ENCODE measurements at regions of chr6 and their contacts with region 1.

Region 1: DNA sequence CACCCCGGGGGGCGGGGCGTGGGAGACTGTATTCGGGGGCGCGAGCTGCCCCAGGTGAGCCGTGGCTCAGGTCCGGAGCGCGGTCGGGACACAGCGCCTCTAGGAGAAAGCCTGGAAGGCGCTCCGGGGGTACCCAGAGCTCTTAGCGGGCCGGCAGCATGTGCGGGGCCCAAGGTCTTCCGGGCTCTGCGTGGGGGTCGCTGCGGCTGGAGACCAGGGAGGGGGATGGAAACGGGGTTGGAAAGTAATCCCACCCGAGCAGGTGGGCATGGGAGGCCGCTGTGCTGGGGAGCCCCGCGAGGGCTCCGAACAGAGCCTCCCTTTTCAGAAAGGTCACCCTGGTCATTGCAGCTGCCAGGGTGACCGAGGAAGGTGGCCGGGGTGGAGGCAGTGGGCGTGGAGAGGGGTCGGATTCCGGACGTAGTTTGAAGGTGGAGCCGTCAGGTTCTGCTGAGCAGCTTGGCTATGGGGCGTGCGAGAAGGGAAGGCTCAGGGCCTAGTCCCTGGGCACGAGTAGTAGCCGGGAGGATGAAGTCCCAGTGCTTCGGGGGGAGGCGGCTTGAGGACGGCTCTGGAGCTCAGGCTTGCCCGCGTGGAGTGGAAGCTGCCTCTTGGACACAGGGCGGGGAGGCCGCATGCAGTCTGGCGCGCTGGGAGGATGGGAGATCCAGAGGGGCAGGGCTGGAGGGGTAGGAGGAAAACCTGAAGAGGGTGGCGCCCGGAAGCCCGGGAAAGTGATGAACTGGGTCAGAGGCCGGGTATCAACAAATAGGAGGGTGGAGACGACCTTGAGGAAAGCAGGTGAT is at the start of gene SIRT5:
- DNase-seq: peak; percentile 93
- H3K4me3 ChIP-seq: peak within 1 kb of the TSS; percentile 46 to 84 (median 76)
- H3K27ac ChIP-seq: peak within 1 kb of the TSS; percentile 96 to 100 (median 98)
- H3K4me1 ChIP-seq: peaks cover 0 to 19% (median 7%) of the 10 kb centered on the region in 4 donors
- H3K27me3 ChIP-seq: no peaks in the 10 kb centered on the region
- CTCF ChIP-seq: no peak
- EP300 ChIP-seq: peak; percentile 29
- POLR2A ChIP-seq: peak; percentile 97
- total RNA-seq, gene SIRT5: 10.1 to 21.0 (median 13.9) TPM

Region 2: DNA sequence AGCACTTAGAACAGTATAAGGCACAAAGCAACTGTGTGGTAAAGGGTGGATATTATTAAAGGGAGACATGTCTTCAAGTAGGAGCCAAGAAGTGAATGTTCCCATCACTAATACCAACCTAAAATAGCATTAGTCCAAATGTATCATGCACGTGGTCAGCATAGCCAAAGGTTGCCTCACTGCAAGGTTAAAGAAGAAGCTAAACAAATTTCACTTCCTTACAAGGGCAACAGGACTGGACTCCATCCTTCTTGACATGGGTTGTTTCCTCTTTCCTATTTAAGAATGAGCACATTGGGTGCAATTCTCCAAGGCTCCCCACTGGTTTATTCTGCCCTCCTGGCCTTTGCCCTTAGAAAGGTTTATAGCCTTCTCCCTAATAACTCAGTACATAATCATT is 671.5 kb before region 1 on chr6:
- in situ Hi-C with region 1: no loop called
- intact Hi-C with region 1: no loop called
- DNase-seq: no peak
- H3K4me3 ChIP-seq: no peak overlapping the region
- H3K27ac ChIP-seq: no peak overlapping the region
- H3K4me1 ChIP-seq: no peaks in the 10 kb centered on the region
- H3K27me3 ChIP-seq: no peaks in the 10 kb centered on the region
- CTCF ChIP-seq: no peak
- EP300 ChIP-seq: no peak
- POLR2A ChIP-seq: no peak

Region 3: GRCh38 chr6:13194852-13195251 is 379.9 kb before region 1 on chr6:
- in situ Hi-C with region 1: loop called in 1 of 4 experiments (anchors 25 kb)
- intact Hi-C with region 1: no loop called
- DNase-seq: peak; percentile 48
- H3K4me3 ChIP-seq: no peak overlapping the region
- H3K27ac ChIP-seq: no peak overlapping the region
- H3K4me1 ChIP-seq: no peaks in the 10 kb centered on the region
- H3K27me3 ChIP-seq: no peaks in the 10 kb centered on the region
- CTCF ChIP-seq: peak; percentile 30 to 45 (median 39)
- EP300 ChIP-seq: no peak
- POLR2A ChIP-seq: no peak

Region 4: GRCh38 chr6:13554929-13555333 is 19.8 kb before region 1 on chr6:
- in situ Hi-C with region 1: no loop called
- intact Hi-C with region 1: no loop called
- DNase-seq: no peak
- H3K4me3 ChIP-seq: no peak overlapping the region
- H3K27ac ChIP-seq: peak overlapping the region in 2 of 4 donors; percentile 24 to 44
- H3K4me1 ChIP-seq: peaks cover 0 to 8% (median 0%) of the 10 kb centered on the region in 4 donors
- H3K27me3 ChIP-seq: no peaks in the 10 kb centered on the region
- CTCF ChIP-seq: no peak
- EP300 ChIP-seq: no peak
- POLR2A ChIP-seq: no peak

Region 5: DNA sequence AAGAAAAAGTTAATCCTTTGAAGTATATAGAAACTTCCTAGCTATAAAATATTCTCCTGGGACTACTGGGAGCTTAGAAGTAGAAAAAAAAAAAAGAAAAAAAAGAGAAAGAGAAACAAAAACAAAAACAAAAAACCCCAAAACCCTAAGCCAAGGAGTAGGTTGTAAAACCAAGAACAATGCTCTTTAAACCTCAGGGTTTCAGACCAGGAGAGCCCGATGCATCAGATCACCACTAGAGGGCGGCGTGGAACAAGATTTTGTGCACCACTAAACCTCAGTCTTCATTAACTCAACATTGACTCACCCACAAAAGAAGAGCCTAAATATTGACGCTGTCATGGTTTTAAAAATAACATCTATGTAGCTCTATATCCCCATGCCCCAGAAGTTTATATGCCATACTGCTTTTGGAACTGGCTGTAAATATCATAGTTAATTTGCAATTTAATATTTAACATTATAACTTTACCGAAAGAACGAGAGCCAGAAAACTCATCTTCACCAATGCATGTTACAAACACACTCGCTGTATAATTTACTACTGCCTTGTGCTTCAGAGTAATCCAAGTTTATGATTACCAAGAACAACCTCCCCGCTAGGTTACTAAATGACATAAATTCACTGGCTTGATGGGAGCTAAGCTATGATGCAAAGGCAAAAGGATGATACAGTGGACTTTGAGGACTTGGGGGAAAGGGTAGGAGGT is 220.4 kb after region 1 on chr6:
- in situ Hi-C with region 1: no loop called
- intact Hi-C with region 1: no loop called
- DNase-seq: peak; percentile 88
- H3K4me3 ChIP-seq: no peak overlapping the region
- H3K27ac ChIP-seq: peak overlapping the region in 2 of 4 donors; percentile 12 to 50
- H3K4me1 ChIP-seq: no peaks in the 10 kb centered on the region
- H3K27me3 ChIP-seq: no peaks in the 10 kb centered on the region
- CTCF ChIP-seq: peak; percentile 89 to 94 (median 92)
- EP300 ChIP-seq: no peak
- POLR2A ChIP-seq: no peak

Measured in transverse colon (tissue), 4 donors.